ENCODE measurements at regions of chr2 and their contacts with region 1.

Region 1: DNA sequence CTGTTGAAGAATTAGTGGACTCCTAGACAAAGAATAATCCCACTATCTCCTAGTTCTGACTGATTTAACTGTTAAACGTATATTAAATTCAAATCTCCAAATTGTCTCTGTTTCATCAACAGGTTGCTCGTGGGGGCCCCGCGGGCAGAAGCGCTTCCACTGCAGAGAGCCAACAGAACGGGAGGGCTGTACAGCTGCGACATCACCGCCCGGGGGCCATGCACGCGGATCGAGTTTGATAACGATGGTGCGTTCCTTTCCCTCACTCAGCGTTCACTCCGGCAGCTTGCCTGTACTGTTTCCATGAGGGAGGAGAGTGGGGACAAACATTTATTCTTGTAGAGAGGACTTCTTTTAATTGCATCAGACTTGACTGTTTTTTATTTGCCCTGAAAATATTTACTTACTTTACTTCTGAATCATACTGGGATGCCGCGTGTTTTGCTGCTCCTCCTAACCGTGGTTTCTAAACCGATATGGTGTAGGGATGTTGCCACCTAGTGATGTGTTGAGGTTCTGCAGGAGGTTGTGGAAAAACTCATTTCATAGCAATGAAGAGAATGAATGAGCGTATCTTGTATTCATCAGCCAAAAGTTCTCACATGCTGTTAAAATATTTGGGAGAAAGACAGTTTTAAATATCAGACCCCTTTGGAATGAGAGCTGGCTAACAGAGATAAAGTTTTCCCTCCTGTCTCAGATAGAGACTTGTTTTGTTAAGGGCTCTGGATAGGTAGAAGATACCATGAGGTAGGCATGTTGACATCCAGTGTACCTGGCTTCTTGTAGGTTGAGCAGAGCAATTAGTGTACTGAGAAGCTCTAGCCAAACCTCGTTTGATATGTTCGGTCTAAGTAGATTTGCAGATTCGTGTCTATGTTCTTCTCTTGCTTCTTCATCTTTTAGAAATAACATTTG is 38.3 kb downstream of the ITGA6 start:
- DNase-seq: peak; percentile 75 to 89 (median 85)
- H3K4me3 ChIP-seq: no peak overlapping the region
- H3K27ac ChIP-seq: no peak overlapping the region
- H3K4me1 ChIP-seq: peaks cover 29 to 51% (median 42%) of the 10 kb centered on the region in 4 experiments
- H3K27me3 ChIP-seq: no peaks in the 10 kb centered on the region

Region 2: GRCh38 chr2:172172513-172173173 is 293.0 kb before region 1 on chr2:
- CTCF ChIA-PET with region 1: interaction called, 173 read pairs
- POLR2A ChIA-PET with region 1: interaction called, 4 read pairs
- DNase-seq: peak; percentile 69 to 82 (median 76)
- H3K4me3 ChIP-seq: peak overlapping the region; percentile 53 to 86 (median 74)
- H3K27ac ChIP-seq: no peak overlapping the region
- H3K4me1 ChIP-seq: peaks cover 0 to 23% (median 9%) of the 10 kb centered on the region in 4 experiments
- H3K27me3 ChIP-seq: no peaks in the 10 kb centered on the region

Region 3: GRCh38 chr2:172234716-172235691 is 230.7 kb before region 1 on chr2:
- CTCF ChIA-PET with region 1: interaction called, 16 read pairs
- POLR2A ChIA-PET with region 1: no interaction called
- DNase-seq: peak; percentile 45 to 94 (median 88)
- H3K4me3 ChIP-seq: peak overlapping the region; percentile 50 to 84 (median 68)
- H3K27ac ChIP-seq: peak overlapping the region; percentile 23 to 46
- H3K4me1 ChIP-seq: peaks cover 3 to 61% (median 49%) of the 10 kb centered on the region in 4 experiments
- H3K27me3 ChIP-seq: no peaks in the 10 kb centered on the region

Region 4: DNA sequence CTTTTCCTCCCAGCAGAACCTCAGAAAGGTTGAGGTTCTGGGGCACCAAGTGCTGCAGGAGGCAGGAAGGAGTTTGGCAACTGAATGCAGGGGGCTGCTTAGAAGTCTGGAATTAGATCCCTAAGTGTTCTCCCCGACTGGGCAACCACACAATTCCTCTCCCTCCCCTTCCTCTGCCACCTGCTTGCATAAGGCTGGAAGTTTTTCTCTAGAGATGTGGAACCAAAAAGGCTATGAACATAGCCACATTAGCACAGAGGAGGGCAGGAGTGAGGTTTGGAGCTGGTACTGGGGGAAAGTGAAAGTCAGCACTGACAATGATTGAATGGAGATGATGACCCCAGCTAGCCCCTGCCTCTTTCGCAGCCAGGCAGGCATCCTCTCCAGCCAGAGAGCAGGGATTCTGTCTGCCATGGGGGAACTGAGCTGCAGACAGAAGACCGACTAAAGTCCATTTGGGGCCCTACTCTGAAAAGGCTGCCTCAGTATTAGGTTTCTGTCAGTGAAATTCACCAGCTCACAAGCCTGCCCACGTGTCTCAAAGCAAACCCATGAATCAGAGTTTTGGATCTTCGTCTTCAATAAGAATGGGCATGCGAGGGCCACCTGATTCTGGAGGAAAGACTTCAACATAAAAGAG is 126.2 kb before region 1 on chr2:
- CTCF ChIA-PET with region 1: interaction called, 41 read pairs
- POLR2A ChIA-PET with region 1: no interaction called
- DNase-seq: peak; percentile 34 to 68 (median 59)
- H3K4me3 ChIP-seq: peak overlapping the region in 4 of 7 experiments; percentile 17 to 74 (median 48)
- H3K27ac ChIP-seq: no peak overlapping the region
- H3K4me1 ChIP-seq: peaks cover 0 to 21% (median 14%) of the 10 kb centered on the region in 4 experiments
- H3K27me3 ChIP-seq: no peaks in the 10 kb centered on the region

Region 5: DNA sequence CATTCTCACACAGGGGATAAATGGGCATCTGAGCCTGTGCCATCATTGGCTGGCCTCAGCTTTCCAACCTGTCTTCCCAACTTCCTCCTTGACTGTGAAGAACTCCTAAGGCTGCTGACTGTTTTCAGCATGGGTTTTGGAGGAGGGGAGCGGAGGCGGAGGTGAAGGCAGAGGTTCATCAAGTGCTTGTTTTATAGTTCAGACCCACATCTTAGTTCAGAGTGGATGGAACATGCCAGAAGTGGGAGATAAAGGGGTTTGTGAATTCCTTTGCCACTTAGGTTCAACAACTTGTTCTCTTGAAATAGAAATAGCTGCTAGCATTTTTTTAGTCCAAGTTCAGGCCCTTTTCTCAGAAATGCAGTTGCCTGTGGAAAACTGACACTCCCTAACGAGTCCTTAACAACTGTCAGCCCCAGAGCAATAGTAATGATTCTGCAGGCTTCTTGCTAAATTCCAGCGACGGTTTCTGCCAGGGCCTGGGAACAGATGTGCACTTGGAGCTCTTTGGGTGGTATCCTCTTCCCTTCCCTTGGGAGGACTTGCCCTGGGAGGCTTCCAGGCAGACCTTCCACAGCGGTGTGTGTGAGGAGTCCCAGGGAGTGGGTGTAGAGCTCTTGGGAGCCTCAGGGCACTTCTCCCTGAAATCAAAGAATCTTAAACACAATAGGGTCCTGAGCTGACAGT is 68.4 kb before region 1 on chr2:
- CTCF ChIA-PET with region 1: interaction called, 13 read pairs
- POLR2A ChIA-PET with region 1: no interaction called
- DNase-seq: no peak
- H3K4me3 ChIP-seq: no peak overlapping the region
- H3K27ac ChIP-seq: no peak overlapping the region
- H3K4me1 ChIP-seq: peaks cover 6 to 45% (median 36%) of the 10 kb centered on the region in 4 experiments
- H3K27me3 ChIP-seq: no peaks in the 10 kb centered on the region

Region 6: DNA sequence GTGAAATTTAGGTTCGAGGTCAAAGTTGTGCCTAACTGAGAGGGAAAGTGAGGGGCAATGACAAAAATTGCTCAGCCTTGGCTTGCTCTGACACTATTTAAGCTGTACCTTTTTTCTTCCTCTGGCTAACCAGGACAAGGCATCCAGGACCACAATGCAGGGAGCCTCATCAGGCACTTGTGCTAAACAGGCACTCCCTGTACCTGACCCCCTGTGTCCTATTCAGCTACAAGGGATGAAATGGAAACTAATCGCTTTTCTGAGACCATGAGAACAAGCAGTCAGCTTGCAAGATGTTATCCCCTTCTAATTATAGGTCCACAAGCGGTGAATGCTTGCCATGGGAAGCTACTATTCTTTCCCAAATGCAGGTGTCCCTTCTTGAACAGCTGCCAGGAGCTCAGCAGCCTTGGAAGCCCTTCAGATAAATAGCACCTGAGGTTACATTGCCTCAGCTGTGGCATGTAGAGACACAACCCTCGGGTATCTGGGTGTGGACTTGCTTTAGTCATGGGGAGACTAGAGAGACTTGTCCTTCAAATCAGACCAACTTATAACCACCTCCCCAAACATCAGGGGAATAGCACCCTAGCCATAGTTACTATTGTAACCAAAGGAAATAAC is 57.4 kb before region 1 on chr2:
- CTCF ChIA-PET with region 1: no interaction called
- POLR2A ChIA-PET with region 1: no interaction called
- DNase-seq: no peak
- H3K4me3 ChIP-seq: no peak overlapping the region
- H3K27ac ChIP-seq: no peak overlapping the region
- H3K4me1 ChIP-seq: no peaks in the 10 kb centered on the region
- H3K27me3 ChIP-seq: no peaks in the 10 kb centered on the region

Region 7: DNA sequence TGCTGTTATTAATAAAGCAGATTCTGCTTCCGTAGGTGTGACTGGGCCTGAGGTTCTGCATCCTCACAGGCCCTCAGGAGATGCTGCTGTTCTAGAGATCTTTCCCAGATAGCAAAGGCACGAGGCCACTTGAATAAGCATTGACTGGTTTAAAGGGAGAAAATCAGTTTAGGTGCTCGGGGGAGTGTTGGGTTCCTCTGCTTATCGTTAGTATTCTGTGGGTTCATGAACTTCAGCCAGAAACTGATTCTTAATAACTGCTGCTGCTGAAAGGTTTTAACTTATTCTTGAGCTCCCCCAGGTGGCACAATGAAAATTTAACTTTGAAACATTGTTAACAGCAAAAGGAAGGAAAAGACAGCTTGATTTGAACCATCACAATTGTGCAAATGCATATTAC is 18.6 kb after region 1 on chr2:
- CTCF ChIA-PET with region 1: interaction called, 23 read pairs
- POLR2A ChIA-PET with region 1: no interaction called
- DNase-seq: peak; percentile 40 to 67 (median 50)
- H3K4me3 ChIP-seq: no peak overlapping the region
- H3K27ac ChIP-seq: no peak overlapping the region
- H3K4me1 ChIP-seq: no peaks in the 10 kb centered on the region
- H3K27me3 ChIP-seq: no peaks in the 10 kb centered on the region

Measured in common myeloid progenitor, CD34-positive (primary cell).